HCT116 (cell line): ENCODE measurements at regions of chr17 and their contacts with region 1.

Region 1: DNA sequence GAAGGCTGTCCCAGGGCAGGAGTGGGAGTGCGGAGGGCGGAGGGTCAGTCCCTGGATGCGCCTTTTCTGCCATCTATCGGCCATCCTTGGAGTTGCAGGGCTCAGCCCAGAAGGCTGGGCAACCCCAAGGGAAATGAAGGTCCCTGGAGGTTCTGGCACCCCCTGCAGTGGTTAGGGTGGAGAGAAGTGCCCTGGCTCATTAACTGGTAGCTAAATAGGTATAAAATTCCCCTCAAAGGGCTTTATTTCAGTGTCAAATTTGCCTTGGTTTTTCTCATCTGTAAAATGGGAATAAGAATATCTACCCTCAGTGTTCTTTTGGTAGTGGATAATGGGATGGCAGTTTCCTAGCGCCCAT is 22.4 kb downstream of the C17orf75 start:
- DNase-seq: peak; percentile 38
- ATAC-seq: peak; percentile 99
- H3K4me3 ChIP-seq: no peak overlapping the region
- H3K27ac ChIP-seq: no peak overlapping the region
- H3K4me1 ChIP-seq: no peaks in the 10 kb centered on the region
- H3K27me3 ChIP-seq: no peaks in the 10 kb centered on the region
- CTCF ChIP-seq: peak; percentile 74 to 99 (median 96)
- POLR2A ChIP-seq: no peak
- RAD21 ChIP-seq: peak; percentile 87

Region 2: GRCh38 chr17:31935512-31935911 is 384.0 kb before region 1 on chr17:
- CTCF ChIA-PET with region 1: no interaction called
- POLR2A ChIA-PET with region 1: no interaction called
- RAD21 ChIA-PET with region 1: no interaction called
- intact Hi-C with region 1: no loop called
- DNase-seq: no peak
- ATAC-seq: no peak
- H3K4me3 ChIP-seq: no peak overlapping the region
- H3K27ac ChIP-seq: no peak overlapping the region
- H3K4me1 ChIP-seq: peaks cover 6 to 14% of the 10 kb centered on the region in 2 experiments; a peak in 3 of 4 replicates
- H3K27me3 ChIP-seq: no peaks in the 10 kb centered on the region
- CTCF ChIP-seq: no peak
- POLR2A ChIP-seq: no peak
- RAD21 ChIP-seq: no peak

Region 3: GRCh38 chr17:32206861-32207260 is 112.7 kb before region 1 on chr17:
- CTCF ChIA-PET with region 1: no interaction called
- POLR2A ChIA-PET with region 1: no interaction called
- RAD21 ChIA-PET with region 1: no interaction called
- intact Hi-C with region 1: loop called (anchors 5 kb)
- DNase-seq: no peak
- ATAC-seq: no peak
- H3K4me3 ChIP-seq: no peak overlapping the region
- H3K27ac ChIP-seq: no peak overlapping the region
- H3K4me1 ChIP-seq: peaks cover 0 to 6% of the 10 kb centered on the region in 2 experiments; a peak in 2 of 4 replicates
- H3K27me3 ChIP-seq: no peaks in the 10 kb centered on the region
- CTCF ChIP-seq: no peak
- POLR2A ChIP-seq: no peak
- RAD21 ChIP-seq: no peak

Region 4: DNA sequence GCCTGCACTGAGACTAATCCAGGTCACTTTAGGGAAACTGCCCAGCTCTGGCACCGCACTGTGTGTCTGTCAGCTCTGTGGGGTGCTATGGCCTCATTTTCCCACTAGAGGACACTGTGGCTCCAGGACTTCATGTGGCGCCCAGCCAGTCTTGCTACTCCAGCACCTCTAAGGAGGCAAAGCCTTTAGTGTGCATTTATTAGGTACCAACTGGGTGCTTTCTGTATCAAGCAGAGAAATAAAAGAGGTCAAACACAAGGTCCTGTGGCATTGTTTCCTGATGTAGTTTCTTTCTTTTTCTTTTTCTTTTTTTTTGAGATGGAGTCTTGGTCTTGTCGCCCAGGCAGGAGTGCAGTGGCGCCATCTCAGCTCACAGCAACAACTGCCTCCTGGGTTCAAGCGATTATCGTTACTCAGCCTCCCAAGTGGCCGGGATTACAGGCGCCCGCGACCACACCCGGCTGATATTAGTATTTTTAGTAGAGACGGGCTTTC is 66.4 kb before region 1 on chr17:
- CTCF ChIA-PET with region 1: interaction called, 17 read pairs
- POLR2A ChIA-PET with region 1: no interaction called
- RAD21 ChIA-PET with region 1: interaction called in 1 of 2 experiments, 10 read pairs
- intact Hi-C with region 1: loop called (anchors 1 kb)
- DNase-seq: peak; percentile 54
- ATAC-seq: peak; percentile 98
- H3K4me3 ChIP-seq: no peak overlapping the region
- H3K27ac ChIP-seq: no peak overlapping the region
- H3K4me1 ChIP-seq: no peaks in the 10 kb centered on the region
- H3K27me3 ChIP-seq: no peaks in the 10 kb centered on the region
- CTCF ChIP-seq: peak; percentile 89 to 99 (median 98)
- POLR2A ChIP-seq: no peak
- RAD21 ChIP-seq: peak; percentile 94

Region 5: GRCh38 chr17:32265192-32265923 is 54.2 kb before region 1 on chr17 and contains the start of gene RHBDL3:
- CTCF ChIA-PET with region 1: no interaction called
- POLR2A ChIA-PET with region 1: no interaction called
- RAD21 ChIA-PET with region 1: no interaction called
- intact Hi-C with region 1: no loop called
- DNase-seq: no peak
- ATAC-seq: peak; percentile 80
- H3K4me3 ChIP-seq: peak within 1 kb of the TSS; percentile 51 to 65
- H3K27ac ChIP-seq: peak within 1 kb of the TSS; percentile 31; the same call in 1 of the 2 replicates
- H3K4me1 ChIP-seq: peaks cover 4 to 36% of the 10 kb centered on the region in 2 experiments; a peak in 3 of 4 replicates
- H3K27me3 ChIP-seq: no peaks in the 10 kb centered on the region; the same call in 1 of the 2 replicates
- CTCF ChIP-seq: no peak
- POLR2A ChIP-seq: no peak
- RAD21 ChIP-seq: no peak
- total RNA-seq, gene RHBDL3: 4.0 TPM

Region 6: DNA sequence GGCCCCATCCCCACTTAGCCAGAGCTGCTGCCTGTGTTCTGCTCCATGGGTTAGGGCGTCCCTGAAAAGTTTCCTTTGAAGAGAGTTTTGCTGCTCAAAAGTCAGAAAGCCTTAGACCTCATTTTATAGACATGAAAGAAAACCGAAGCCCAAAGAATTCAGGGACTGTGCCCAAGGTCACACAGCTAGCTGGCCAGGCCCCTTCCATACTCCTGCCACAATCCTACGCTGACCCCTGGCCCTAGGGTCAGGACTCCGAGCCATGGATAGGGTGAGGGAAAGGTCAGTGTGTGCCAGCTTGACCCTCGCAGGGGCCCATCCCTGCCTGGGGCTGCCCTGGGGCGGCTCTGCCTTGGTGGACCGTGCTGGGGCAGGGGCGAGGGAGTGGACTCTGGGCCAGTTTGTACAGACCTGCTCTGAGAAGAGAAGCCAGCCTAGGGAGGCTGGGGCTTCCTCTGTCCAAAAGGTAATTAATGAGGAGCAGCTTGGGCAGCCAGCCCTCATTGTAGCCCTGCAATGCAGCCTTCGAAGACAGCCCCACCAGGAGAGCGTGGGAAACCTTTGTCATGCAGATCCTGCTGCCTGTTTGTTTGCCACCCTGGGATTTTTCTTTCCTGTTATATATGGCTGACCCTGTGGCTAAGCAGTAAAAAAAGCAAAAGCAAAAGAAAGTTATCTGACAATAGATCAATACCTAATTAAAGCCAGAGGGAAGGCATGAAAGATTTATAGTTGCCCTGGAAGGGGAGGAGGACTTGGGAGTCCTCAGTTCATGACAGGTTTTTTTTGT is 16.5 kb before region 1 on chr17:
- CTCF ChIA-PET with region 1: no interaction called
- POLR2A ChIA-PET with region 1: no interaction called
- RAD21 ChIA-PET with region 1: no interaction called
- intact Hi-C with region 1: no loop called
- DNase-seq: no peak
- ATAC-seq: no peak
- H3K4me3 ChIP-seq: no peak overlapping the region
- H3K27ac ChIP-seq: no peak overlapping the region
- H3K4me1 ChIP-seq: no peaks in the 10 kb centered on the region
- H3K27me3 ChIP-seq: no peaks in the 10 kb centered on the region
- CTCF ChIP-seq: no peak
- POLR2A ChIP-seq: no peak
- RAD21 ChIP-seq: no peak

Region 7: DNA sequence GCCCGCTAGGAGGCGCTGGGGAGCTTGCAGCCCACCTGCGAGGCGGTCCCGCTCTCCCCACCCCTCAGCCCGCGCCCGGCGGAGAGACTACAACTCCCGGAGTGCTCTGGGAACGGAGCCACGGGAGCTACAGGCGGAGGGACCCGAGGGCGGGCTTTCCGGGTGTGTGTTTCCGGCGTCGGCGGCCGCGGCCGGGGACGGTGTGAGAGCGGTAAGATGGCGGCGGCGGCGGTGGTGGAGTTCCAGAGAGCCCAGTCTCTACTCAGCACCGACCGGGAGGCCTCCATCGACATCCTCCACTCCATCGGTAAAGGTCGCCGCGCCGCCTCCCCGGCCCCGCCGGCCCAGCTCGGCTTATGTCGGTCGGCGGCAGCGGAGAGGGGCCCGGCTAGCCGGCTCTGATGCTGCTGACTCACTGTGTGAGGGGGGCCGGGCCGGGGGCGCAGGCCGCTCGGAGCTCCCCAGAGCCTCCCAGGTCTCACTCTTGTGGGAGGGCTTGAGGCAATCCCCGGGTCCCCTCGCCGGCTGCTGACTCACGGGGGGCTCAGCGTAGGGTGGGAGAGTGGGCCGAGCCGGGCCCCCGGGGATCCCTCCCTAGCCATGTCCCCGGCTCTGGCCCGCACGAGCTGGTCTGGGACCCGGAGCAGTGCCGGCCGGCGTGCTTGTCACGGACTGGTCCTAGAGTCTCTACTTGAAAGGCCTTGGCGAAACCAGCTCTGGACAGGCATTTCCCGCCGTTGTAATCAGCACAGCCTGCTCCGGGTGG is 125.0 kb after region 1 on chr17 and contains the start of gene PSMD11:
- CTCF ChIA-PET with region 1: no interaction called
- POLR2A ChIA-PET with region 1: no interaction called
- RAD21 ChIA-PET with region 1: no interaction called
- intact Hi-C with region 1: no loop called
- DNase-seq: peak; percentile 92
- ATAC-seq: peak; percentile 94
- H3K4me3 ChIP-seq: peak within 1 kb of the TSS; percentile 58 to 96
- H3K27ac ChIP-seq: peak within 1 kb of the TSS; percentile 88
- H3K4me1 ChIP-seq: peaks cover 11 to 22% of the 10 kb centered on the region in 2 experiments; a peak in 3 of 4 replicates
- H3K27me3 ChIP-seq: no peaks in the 10 kb centered on the region
- CTCF ChIP-seq: peak; percentile 73 to 92 (median 90); a peak in 4 of 6 replicates
- POLR2A ChIP-seq: no peak
- RAD21 ChIP-seq: peak; percentile 46
- total RNA-seq, gene PSMD11: 143 TPM